ENCODE measurements at regions of chr5 and their contacts with region 1.

Region 1: DNA sequence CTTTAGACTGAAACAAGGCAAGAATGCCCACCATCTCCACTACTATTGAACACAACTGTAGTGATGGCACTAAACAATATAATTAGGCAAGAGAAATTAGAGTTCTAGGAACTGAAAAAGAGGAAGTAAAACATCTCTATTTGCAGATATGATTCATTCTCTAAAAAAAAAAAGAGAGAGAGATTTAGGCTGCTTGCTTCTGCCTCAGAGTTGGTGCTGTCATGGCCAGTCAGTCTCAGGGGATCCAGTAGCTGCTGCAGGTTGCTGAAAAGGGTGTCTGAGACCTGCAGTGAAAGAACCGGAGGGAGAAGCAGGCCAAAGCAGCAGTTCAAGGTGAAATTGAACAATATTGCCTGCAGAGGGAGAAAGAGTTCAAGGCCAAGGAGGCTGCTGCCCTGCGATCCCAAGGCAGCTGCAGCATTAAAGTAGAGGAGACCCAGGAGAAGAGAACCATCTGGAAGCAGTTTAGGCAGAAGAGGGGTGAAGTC is 72.5 kb downstream of the AP3B1 start:
- DNase-seq: peak; percentile 92
- ATAC-seq: peak; percentile 100
- H3K4me3 ChIP-seq: no peak overlapping the region
- H3K27ac ChIP-seq: no peak overlapping the region
- H3K4me1 ChIP-seq: peaks cover 10% of the 10 kb centered on the region
- H3K27me3 ChIP-seq: no peaks in the 10 kb centered on the region
- CTCF ChIP-seq: peak; percentile 52 to 61 (median 59); a peak in 5 of 6 replicates
- EP300 ChIP-seq: peak; percentile 65 to 95
- POLR2A ChIP-seq: no peak
- RAD21 ChIP-seq: peak; percentile 60

Region 2: GRCh38 chr5:77924081-77924480 is 297.9 kb before region 1 on chr5:
- CTCF ChIA-PET with region 1: no interaction called
- POLR2A ChIA-PET with region 1: no interaction called
- RAD21 ChIA-PET with region 1: no interaction called
- SMC1A ChIA-PET with region 1: no interaction called
- in situ Hi-C with region 1: no loop called
- intact Hi-C with region 1: no loop called
- DNase-seq: no peak
- ATAC-seq: no peak
- H3K4me3 ChIP-seq: no peak overlapping the region
- H3K27ac ChIP-seq: no peak overlapping the region
- H3K4me1 ChIP-seq: peaks cover 7% of the 10 kb centered on the region
- H3K27me3 ChIP-seq: no peaks in the 10 kb centered on the region
- CTCF ChIP-seq: no peak
- EP300 ChIP-seq: no peak
- POLR2A ChIP-seq: no peak
- RAD21 ChIP-seq: no peak

Region 3: DNA sequence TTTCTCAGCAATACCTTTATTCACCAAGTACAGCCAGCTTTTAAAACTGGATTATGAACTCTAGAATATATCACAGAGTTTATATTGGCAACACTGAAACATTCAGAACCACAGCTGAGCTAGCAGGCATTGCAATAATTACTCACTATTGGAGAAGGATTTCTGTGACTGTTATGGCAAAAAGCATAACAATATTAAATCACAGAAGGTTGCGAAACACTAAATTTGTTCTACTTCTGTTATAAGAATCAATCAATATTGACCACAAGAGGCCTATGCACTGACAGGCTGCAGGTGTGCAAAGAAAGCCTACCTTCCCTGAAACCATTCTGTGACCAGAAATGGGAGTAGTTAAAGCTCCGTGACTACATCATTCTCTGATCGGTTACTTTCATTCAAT is 13.3 kb after region 1 on chr5:
- CTCF ChIA-PET with region 1: interaction called, 5 read pairs
- POLR2A ChIA-PET with region 1: no interaction called
- RAD21 ChIA-PET with region 1: no interaction called
- SMC1A ChIA-PET with region 1: interaction called, 10 read pairs
- in situ Hi-C with region 1: no loop called
- intact Hi-C with region 1: no loop called
- DNase-seq: no peak
- ATAC-seq: peak; percentile 21; the same call in 1 of the 3 replicates
- H3K4me3 ChIP-seq: no peak overlapping the region
- H3K27ac ChIP-seq: no peak overlapping the region
- H3K4me1 ChIP-seq: no peaks in the 10 kb centered on the region
- H3K27me3 ChIP-seq: no peaks in the 10 kb centered on the region
- CTCF ChIP-seq: no peak
- EP300 ChIP-seq: no peak
- POLR2A ChIP-seq: no peak
- RAD21 ChIP-seq: no peak

Region 4: GRCh38 chr5:78269088-78269703 is 47.2 kb after region 1 on chr5:
- CTCF ChIA-PET with region 1: interaction called, 26 read pairs
- POLR2A ChIA-PET with region 1: no interaction called
- RAD21 ChIA-PET with region 1: interaction called, 19 read pairs
- SMC1A ChIA-PET with region 1: interaction called, 11 read pairs
- in situ Hi-C with region 1: no loop called
- intact Hi-C with region 1: loop called (anchors 1 kb)
- DNase-seq: no peak
- ATAC-seq: peak; percentile 84
- H3K4me3 ChIP-seq: no peak overlapping the region
- H3K27ac ChIP-seq: no peak overlapping the region
- H3K4me1 ChIP-seq: peaks cover 10% of the 10 kb centered on the region; the same call in 1 of the 2 replicates
- H3K27me3 ChIP-seq: no peaks in the 10 kb centered on the region
- CTCF ChIP-seq: peak in 2 of 3 experiments; percentile 17 to 42; a peak in 4 of 6 replicates
- EP300 ChIP-seq: no peak
- POLR2A ChIP-seq: no peak
- RAD21 ChIP-seq: peak; percentile 42; the same call in 1 of the 2 replicates

Region 5: DNA sequence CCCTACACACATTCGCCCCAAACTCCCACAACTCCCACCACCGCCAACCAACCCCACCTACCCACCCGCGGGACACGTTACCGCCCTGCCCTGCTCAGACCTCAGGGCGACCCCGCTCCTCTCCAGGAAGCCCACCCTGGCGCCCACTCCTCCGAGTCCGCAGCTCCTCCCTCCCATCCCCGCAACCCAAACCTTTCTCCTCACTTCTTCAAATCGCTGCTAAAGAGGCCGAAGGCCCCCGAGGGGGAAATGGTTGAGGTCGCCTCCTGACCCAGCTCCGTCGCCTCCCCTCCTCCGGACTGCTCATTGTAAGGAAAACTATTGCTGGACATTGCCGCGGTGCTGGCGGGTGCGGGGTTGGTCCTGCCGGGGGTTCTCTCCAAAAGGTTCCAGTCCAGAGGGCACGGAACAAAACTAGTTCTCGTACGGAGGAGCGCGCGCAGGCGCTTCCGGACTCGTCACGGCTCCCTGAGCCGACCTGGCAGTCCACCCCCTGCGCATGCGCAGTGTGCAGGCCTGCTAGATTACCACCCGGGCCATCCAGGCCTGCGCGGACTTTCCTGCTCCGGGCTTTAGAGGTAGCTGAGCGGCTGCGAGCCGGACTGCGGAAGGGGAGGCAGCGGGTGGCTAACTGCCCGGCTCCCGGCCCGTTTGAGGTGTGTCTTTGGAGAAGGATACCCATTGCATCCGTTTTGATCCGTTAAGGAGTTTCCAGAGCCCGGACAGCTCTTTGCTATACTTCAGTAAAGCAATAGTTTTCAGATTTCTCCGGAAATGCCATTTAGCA is 72.4 kb after region 1 on chr5 and contains the start of gene AP3B1:
- CTCF ChIA-PET with region 1: interaction called, 6 read pairs
- POLR2A ChIA-PET with region 1: interaction called, 5 read pairs
- RAD21 ChIA-PET with region 1: no interaction called
- SMC1A ChIA-PET with region 1: interaction called, 3 read pairs
- in situ Hi-C with region 1: no loop called
- intact Hi-C with region 1: loop called (anchors 2 kb)
- DNase-seq: peak; percentile 89
- ATAC-seq: peak; percentile 91
- H3K4me3 ChIP-seq: peak within 1 kb of the TSS; percentile 97
- H3K27ac ChIP-seq: peak within 1 kb of the TSS; percentile 89
- H3K4me1 ChIP-seq: no peaks in the 10 kb centered on the region
- H3K27me3 ChIP-seq: no peaks in the 10 kb centered on the region
- CTCF ChIP-seq: no peak
- EP300 ChIP-seq: no peak; a peak in 1 of 4 replicates
- POLR2A ChIP-seq: peak; percentile 91
- RAD21 ChIP-seq: no peak
- polyA plus RNA-seq, gene AP3B1: 32.8 to 36.2 TPM

Region 6: GRCh38 chr5:78359831-78360673 is 138.0 kb after region 1 on chr5 and contains the start of gene SCAMP1:
- CTCF ChIA-PET with region 1: no interaction called
- POLR2A ChIA-PET with region 1: no interaction called
- RAD21 ChIA-PET with region 1: no interaction called
- SMC1A ChIA-PET with region 1: interaction called, 3 read pairs
- in situ Hi-C with region 1: no loop called
- intact Hi-C with region 1: loop called (anchors 5 kb)
- DNase-seq: peak; percentile 83
- ATAC-seq: peak; percentile 94
- H3K4me3 ChIP-seq: peak within 1 kb of the TSS; percentile 94
- H3K27ac ChIP-seq: peak within 1 kb of the TSS; percentile 96
- H3K4me1 ChIP-seq: peaks cover 5% of the 10 kb centered on the region
- H3K27me3 ChIP-seq: no peaks in the 10 kb centered on the region
- CTCF ChIP-seq: peak; percentile 23 to 29 (median 28); a peak in 4 of 6 replicates
- EP300 ChIP-seq: peak; percentile 67 to 78
- POLR2A ChIP-seq: peak; percentile 94
- RAD21 ChIP-seq: no peak
- polyA plus RNA-seq, gene SCAMP1: 9.1 to 21.2 TPM